SK-N-SH (cell line): ENCODE measurements at regions of chr22 and their contacts with region 1.

Region 1: DNA sequence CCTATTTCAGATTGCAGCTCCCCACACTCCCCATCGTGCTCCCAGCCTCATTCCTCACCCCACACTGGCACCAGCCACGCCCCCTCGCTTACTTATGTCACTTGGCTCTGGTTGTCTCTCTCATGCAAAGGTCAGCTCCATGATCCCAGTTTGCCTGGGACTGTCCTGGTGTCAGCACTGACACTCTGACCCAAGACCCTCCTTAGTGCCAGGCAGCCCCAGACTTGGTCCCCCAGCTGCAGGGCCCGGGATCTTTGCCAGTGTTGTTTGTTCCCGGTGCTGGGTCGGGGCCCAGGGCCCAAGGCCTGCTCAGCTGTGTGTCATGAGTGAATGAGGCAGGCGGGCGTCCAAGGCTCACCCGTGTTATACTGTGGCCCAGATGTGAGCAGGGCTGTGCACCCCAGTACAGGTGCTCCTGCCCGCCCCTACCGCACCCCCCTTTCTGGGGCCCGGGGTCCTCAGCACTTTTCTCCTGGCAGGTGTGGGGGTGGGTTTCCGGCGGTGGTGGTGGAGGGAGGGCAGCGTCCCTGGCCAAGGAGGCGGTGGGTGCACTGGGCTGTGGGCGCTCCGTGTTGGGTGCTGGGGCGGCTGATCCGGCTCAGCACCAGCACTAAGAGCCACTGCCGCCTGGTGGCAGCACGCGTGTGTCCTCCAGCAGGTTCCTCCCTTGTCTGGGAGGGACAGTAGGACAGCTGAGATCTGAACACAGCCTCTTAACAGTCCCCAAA is 19.5 kb downstream of the IL17REL start:
- DNase-seq: peak; percentile 85
- H3K4me3 ChIP-seq: no peak overlapping the region
- H3K27ac ChIP-seq: no peak overlapping the region
- H3K4me1 ChIP-seq: no peaks in the 10 kb centered on the region
- H3K27me3 ChIP-seq: no peaks in the 10 kb centered on the region
- CTCF ChIP-seq: peak; percentile 57
- EP300 ChIP-seq: no peak
- RAD21 ChIP-seq: peak; percentile 73

Region 2: GRCh38 chr22:49800408-49801238 is 192.5 kb before region 1 on chr22:
- CTCF ChIA-PET with region 1: no interaction called
- POLR2A ChIA-PET with region 1: no interaction called
- DNase-seq: no peak
- H3K4me3 ChIP-seq: no peak overlapping the region
- H3K27ac ChIP-seq: no peak overlapping the region
- H3K4me1 ChIP-seq: peaks cover 0 to 1% of the 10 kb centered on the region in 2 experiments; a peak in 1 of 4 replicates
- H3K27me3 ChIP-seq: no peaks in the 10 kb centered on the region
- CTCF ChIP-seq: no peak
- EP300 ChIP-seq: no peak
- RAD21 ChIP-seq: no peak

Region 3: GRCh38 chr22:49930739-49931412 is 62.2 kb before region 1 on chr22:
- CTCF ChIA-PET with region 1: interaction called, 28 read pairs
- POLR2A ChIA-PET with region 1: no interaction called
- DNase-seq: peak; percentile 74
- H3K4me3 ChIP-seq: no peak overlapping the region
- H3K27ac ChIP-seq: no peak overlapping the region
- H3K4me1 ChIP-seq: peaks cover 0 to 30% of the 10 kb centered on the region in 2 experiments; a peak in 1 of 4 replicates
- H3K27me3 ChIP-seq: no peaks in the 10 kb centered on the region
- CTCF ChIP-seq: peak; percentile 45
- EP300 ChIP-seq: no peak
- RAD21 ChIP-seq: peak; percentile 77

Region 4: DNA sequence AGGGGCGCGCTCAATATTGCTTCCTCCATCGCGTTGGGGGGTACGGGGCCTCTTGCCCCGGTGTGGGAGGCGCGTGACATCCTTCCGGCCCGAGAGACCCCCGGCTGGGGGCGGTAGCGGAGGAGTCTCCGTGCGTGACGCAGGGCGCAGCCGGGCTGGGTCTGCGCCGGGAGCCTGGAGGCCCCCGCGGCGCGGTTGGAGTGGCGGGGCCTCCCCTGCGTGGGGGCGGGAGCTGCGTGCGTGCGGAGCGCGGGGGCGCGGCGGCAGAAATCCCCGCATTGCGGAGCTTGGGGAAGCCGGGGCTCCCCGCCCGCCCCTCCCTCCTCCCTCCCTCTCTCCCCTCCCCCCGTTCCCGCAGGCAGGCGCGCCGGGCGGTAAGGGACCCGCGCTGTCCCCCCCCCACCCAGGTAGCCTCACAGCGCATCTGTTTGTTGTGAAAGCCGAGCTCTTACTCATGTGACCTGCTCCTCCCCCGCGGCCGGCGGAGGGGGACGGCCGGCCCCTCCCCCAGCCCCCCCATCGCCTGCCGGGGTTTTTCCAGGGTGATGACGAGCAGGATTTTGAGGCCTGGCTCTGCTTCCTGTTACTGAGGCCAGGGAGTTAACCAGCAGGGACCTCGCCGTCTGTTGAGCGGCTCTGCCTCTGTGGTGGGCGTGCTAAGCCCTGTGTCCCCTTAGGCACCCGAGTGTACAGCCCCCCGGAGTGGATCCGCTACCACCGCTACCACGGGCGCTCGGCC is 30.9 kb before region 1 on chr22:
- CTCF ChIA-PET with region 1: interaction called, 10 read pairs
- POLR2A ChIA-PET with region 1: no interaction called
- DNase-seq: peak; percentile 89
- H3K4me3 ChIP-seq: peak overlapping the region; percentile 67 to 76
- H3K27ac ChIP-seq: peak overlapping the region; percentile 55 to 74; a peak in 3 of 4 replicates
- H3K4me1 ChIP-seq: peaks cover 20 to 29% of the 10 kb centered on the region in 2 experiments; a peak in 2 of 4 replicates
- H3K27me3 ChIP-seq: no peaks in the 10 kb centered on the region
- CTCF ChIP-seq: no peak
- EP300 ChIP-seq: peak in 1 of 2 experiments; percentile 11; a peak in 1 of 4 replicates
- RAD21 ChIP-seq: no peak

Region 5: DNA sequence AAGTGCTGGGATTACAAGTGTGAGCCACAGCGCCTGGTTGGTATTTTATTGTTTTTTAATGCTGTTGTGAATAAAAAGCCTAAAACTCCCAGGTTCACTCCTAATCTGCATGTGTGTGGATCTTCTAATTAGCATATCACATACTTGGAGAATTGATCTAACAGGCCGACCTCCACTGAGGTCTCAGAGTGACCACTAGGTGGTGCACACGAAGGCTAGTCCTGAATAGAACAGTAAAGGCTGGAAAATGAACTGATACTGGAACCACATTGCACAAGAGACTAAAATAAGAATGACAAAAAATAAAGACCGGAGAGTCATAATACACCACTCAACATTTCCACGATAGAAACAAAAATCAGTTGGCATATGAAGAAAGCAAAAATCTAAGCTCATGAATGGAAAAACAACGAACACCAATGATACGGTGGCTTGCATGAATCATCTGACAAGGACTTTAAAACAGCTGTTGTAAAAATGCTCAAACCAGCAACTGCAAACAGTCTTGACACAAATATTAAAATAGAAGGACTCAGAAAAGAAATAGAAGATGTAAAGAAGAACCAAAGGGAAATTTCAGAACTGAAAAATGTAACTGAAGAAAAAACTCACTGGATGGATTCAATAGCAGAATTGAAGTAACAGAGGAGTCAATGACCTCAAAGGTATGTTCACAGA is 13.4 kb before region 1 on chr22:
- CTCF ChIA-PET with region 1: interaction called, 45 read pairs
- POLR2A ChIA-PET with region 1: no interaction called
- DNase-seq: peak; percentile 64
- H3K4me3 ChIP-seq: peak overlapping the region in 1 of 2 experiments; percentile 11; a peak in 1 of 4 replicates
- H3K27ac ChIP-seq: no peak overlapping the region
- H3K4me1 ChIP-seq: no peaks in the 10 kb centered on the region; a peak in 1 of 4 replicates
- H3K27me3 ChIP-seq: peaks cover 21% of the 10 kb centered on the region
- CTCF ChIP-seq: peak; percentile 65
- EP300 ChIP-seq: no peak
- RAD21 ChIP-seq: no peak; the same call in 1 of the 2 replicates

Region 6: GRCh38 chr22:50085211-50085972 is 92.3 kb after region 1 on chr22 and contains the start of gene MLC1:
- CTCF ChIA-PET with region 1: no interaction called
- POLR2A ChIA-PET with region 1: no interaction called
- DNase-seq: no peak
- H3K4me3 ChIP-seq: no peak within 1 kb of the TSS
- H3K27ac ChIP-seq: no peak within 1 kb of the TSS
- H3K4me1 ChIP-seq: peaks cover 0 to 16% of the 10 kb centered on the region in 2 experiments; a peak in 1 of 4 replicates
- H3K27me3 ChIP-seq: no peaks in the 10 kb centered on the region; the same call in 1 of the 2 replicates
- CTCF ChIP-seq: no peak
- EP300 ChIP-seq: no peak
- RAD21 ChIP-seq: no peak
- polyA plus RNA-seq, gene MLC1: not detected in 2 replicates